ENCODE measurements at regions of chr19 and their contacts with region 1.

Region 1: GRCh38 chr19:7674010-7675005 is 2.6 kb upstream of the MCEMP1 start:
- DNase-seq: peak; percentile 67 to 78 (median 73)
- ATAC-seq: peak; percentile 77 to 93 (median 82)
- H3K4me3 ChIP-seq: no peak overlapping the region
- H3K27ac ChIP-seq: no peak overlapping the region
- H3K4me1 ChIP-seq: no peaks in the 10 kb centered on the region
- H3K27me3 ChIP-seq: no peaks in the 10 kb centered on the region
- CTCF ChIP-seq: no peak
- POLR2A ChIP-seq: no peak

Region 2: GRCh38 chr19:7565332-7565731 is 109.0 kb before region 1 on chr19:
- intact Hi-C with region 1: loop called (anchors 5 kb)
- DNase-seq: no peak
- ATAC-seq: no peak
- H3K4me3 ChIP-seq: no peak overlapping the region
- H3K27ac ChIP-seq: no peak overlapping the region
- H3K4me1 ChIP-seq: no peaks in the 10 kb centered on the region
- H3K27me3 ChIP-seq: no peaks in the 10 kb centered on the region
- CTCF ChIP-seq: no peak
- POLR2A ChIP-seq: no peak

Region 3: DNA sequence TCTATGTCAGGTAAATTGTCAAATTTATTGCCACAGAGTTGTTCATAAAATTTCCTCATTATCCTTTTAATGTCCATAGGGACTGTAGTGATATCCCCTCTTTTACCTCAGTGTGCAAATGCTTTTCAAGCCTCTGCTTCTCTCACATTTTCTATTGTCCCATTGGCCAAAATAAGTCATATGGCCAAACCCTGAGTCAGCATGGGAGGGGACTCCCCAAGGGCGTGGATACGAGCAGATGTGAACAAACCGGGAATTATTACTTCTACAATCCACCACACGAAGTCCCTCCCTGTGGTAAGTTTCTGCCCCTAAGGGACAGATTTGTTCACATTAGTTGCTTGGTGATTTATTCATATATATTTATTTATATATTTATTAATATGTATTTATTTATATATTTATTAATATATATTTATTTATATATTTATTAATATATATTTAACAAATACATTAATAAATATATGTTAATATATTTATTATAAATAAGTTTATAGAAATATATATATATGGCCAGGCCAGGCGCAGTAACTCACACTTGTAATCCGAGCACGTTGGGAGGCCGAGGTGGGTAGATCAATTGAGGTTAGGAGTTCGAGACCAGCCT is 98.8 kb before region 1 on chr19:
- intact Hi-C with region 1: loop called in 1 of 2 experiments (anchors 5 kb)
- DNase-seq: no peak
- ATAC-seq: no peak
- H3K4me3 ChIP-seq: no peak overlapping the region
- H3K27ac ChIP-seq: no peak overlapping the region
- H3K4me1 ChIP-seq: no peaks in the 10 kb centered on the region
- H3K27me3 ChIP-seq: no peaks in the 10 kb centered on the region
- CTCF ChIP-seq: no peak
- POLR2A ChIP-seq: no peak

Region 4: DNA sequence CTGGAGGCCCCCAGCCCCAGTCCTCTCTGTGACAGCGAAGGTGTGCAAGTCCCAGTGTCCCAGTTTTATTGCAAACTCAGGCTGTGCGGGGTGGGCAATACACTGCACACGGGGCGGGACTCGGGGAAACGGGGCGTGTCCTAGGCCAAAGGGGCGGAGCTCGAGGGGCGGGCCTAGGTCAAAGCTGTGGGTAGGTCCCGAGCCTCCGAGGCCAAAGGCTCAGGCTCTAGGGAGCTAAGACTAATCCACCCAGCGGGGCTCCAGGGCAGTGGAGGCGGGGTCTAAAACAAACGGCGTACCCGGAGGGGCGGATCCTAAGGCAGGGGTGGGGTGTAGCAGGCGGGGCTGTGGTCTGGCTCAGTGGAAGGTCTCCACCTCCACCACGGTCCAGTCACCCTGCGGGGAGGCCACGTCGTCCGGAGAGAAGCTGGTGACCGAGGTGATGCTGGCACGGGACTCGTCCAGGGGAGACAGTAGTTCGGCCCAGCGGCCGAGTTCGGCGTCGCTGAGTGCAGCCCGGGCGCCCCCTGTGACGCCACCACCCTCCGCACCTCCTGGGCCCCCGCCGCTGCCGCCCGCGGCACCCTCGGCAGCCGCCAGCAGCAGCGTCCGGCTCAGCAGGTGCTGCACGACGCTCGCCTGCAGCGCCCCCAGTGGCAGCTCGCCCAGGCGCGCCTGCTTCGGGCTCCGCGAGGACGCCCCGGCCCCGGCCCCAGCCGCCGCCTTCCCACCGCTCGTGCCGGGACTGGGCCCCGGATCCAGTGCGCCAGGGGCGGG is 194.6 kb after region 1 on chr19:
- intact Hi-C with region 1: no loop called
- DNase-seq: peak; percentile 74 to 82 (median 78)
- ATAC-seq: peak; percentile 67 to 85 (median 74)
- H3K4me3 ChIP-seq: peak overlapping the region; percentile 39 to 56 (median 43)
- H3K27ac ChIP-seq: no peak overlapping the region
- H3K4me1 ChIP-seq: peaks cover 0 to 6% (median 0%) of the 10 kb centered on the region in 4 donors
- H3K27me3 ChIP-seq: no peaks in the 10 kb centered on the region
- CTCF ChIP-seq: peak; percentile 78 to 95 (median 83)
- POLR2A ChIP-seq: no peak

Measured in right lobe of liver (tissue), 6 donors.